Activated CD4-positive, alpha-beta T cell treated with anti-CD3 and anti-CD28 coated beads, Interleukin-2, amount 10 ng/mL, durations not matched to agents 24 days and 14 days (primary cell): ENCODE measurements at regions of chr20 and their contacts with region 1.

Region 1: DNA sequence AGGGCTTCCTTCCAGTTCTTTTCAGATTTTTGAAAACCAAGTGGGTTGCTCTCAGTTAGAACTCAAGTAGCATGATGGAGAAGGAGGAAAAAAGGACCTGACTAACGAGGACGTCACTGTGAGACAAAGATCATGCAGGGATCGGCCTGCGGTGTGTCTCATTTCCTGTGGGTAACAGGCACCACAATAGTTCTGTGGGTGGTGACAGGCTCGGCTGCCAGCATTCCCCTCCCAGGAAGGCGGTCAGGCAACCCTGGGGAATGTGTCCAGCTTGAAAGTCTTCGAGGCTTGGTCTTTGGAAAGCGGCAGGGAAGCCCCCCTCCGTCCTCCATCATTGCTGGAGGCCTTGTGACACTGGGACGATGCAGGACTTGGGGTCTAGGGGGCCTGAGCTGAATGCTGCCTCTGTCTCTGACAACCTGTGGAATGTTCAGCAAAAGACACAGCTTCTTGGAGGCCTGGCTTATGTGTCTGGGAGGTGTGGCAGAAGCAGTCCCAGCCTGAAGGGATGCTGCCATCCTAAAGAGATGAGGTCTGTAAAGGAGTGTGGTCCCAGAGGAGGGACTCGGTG is 121.0 kb downstream of the BCAS1 start:
- DNase-seq: peak; percentile 94
- H3K4me3 Mint-ChIP-seq: peak overlapping the region; percentile 80
- H3K27ac Mint-ChIP-seq: peak overlapping the region; percentile 90
- H3K4me1 Mint-ChIP-seq: peaks cover 34% of the 10 kb centered on the region
- H3K27me3 Mint-ChIP-seq: peaks cover 4% of the 10 kb centered on the region

Region 2: DNA sequence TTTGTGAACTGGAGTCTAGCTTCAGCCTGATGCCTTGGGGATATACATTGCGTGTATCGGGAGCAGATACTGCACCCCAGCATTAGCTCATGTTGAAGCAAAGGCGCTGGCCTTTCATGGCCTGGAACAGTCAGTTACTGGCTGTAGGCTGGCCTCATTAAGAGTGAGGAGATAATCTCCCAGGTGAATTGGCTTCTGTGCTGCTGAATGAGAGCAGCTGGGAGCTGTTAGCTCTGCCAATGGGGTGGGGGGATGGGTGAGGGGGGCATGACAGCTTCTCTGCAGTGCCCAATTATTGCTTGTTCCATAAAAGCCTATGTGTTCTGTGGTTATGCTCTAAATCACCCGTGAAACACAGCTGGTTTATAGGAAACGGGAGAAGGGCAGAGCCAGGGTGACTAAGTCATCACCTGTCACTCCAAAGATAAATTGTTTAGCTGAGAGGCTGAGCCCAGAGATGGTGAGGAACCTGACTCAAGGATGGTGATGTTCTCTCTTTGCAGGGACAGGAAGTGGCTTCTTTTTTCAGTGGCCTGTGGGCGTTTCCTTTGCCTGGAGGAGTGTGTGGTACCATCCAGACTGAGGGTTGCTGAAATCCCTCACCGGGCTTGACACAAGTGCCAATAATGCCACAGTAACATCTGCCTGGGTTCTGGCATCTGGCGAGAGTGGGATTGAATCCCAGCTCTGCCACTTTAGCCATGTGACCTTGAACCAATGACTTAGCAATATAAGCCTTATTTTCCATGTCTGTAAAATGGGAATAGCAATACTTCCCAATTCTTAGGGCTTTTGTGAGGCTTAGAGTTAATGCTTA is 49.8 kb before region 1 on chr20:
- intact Hi-C with region 1: loop called (anchors 2 kb)
- DNase-seq: peak; percentile 92
- H3K4me3 Mint-ChIP-seq: peak overlapping the region; percentile 53
- H3K27ac Mint-ChIP-seq: peak overlapping the region; percentile 95
- H3K4me1 Mint-ChIP-seq: peaks cover 53% of the 10 kb centered on the region
- H3K27me3 Mint-ChIP-seq: no peaks in the 10 kb centered on the region

Region 3: GRCh38 chr20:54044156-54044555 is 94.8 kb after region 1 on chr20:
- intact Hi-C with region 1: loop called (anchors 1 kb)
- DNase-seq: peak; percentile 63
- H3K4me3 Mint-ChIP-seq: peak overlapping the region; percentile 38
- H3K27ac Mint-ChIP-seq: peak overlapping the region; percentile 67
- H3K4me1 Mint-ChIP-seq: peaks cover 18% of the 10 kb centered on the region
- H3K27me3 Mint-ChIP-seq: peaks cover 9% of the 10 kb centered on the region

Region 4: DNA sequence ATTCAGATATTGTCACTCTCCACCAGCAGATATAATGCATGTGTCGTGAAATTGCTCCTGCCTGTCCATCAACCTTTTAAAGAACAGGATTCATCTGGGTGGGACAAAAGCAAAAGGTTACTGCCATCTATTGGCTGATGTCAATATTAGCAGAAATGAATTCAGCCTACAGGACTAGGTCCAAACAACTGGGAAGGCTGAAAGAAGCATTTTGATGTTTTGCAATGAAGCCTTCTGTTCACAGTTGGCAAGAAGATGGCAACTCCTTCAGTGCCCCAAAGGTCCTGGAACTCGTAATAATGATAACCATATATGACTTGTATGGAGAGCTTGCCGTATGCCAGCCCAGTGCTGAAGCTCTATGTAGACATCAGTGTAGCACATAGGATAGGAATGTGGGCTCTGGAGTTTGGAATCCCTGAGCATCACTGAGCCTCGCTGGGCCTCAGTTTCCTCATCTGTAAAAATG is 113.4 kb after region 1 on chr20:
- intact Hi-C with region 1: loop called (anchors 2 kb)
- DNase-seq: peak; percentile 72
- H3K4me3 Mint-ChIP-seq: no peak overlapping the region
- H3K27ac Mint-ChIP-seq: no peak overlapping the region
- H3K4me1 Mint-ChIP-seq: peaks cover 5% of the 10 kb centered on the region
- H3K27me3 Mint-ChIP-seq: peaks cover 6% of the 10 kb centered on the region

Region 5: DNA sequence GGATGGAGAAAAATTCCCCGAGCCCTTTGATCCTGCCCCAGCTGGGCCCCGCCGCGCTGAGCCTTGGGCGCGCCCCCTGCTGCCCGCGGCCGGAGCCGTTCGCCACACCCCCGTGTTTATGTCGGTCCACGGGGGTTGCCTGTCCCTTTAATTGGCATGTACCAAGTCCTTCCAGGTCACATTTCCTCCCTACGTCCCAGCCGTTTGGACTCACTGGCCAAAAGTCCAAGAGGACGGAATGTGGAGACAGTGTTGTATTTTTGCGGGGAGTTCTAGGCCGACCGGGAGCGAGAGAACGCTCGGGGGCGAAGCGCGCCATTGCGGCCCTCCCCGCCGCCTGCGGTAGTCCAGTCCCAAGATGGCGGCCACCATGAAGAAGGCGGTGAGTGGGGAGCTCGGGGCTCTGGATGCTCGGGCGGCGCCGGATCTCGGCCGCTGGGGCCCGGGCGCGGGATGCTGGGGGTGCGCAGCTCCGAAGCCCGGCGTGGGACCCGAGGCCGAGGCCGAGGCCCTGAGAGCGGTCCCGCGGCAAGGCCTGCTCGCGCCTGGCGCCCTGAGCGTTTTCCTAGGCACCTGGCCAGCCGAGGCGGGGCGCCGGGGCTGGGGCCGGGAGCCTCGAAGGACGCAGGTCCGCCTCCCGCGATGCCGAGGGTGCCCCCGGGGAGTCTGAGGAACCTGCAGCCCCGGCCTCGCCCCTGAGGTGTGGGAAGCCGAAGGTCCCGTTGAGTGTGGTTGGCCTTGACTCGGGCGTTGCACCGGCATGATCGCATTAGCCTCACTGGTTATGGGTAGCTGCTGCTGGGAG is 258.5 kb after region 1 on chr20 and contains the start of gene PFDN4:
- intact Hi-C with region 1: loop called (anchors 2 kb)
- DNase-seq: peak; percentile 95
- H3K4me3 Mint-ChIP-seq: peak within 1 kb of the TSS; percentile 88
- H3K27ac Mint-ChIP-seq: peak within 1 kb of the TSS; percentile 100
- H3K4me1 Mint-ChIP-seq: peaks cover 39% of the 10 kb centered on the region
- H3K27me3 Mint-ChIP-seq: no peaks in the 10 kb centered on the region
- total RNA-seq, gene PFDN4: 72.2 and 80.5 TPM in 2 replicates